ENCODE measurements at regions of chr2 and their contacts with region 1.

Region 1: GRCh38 chr2:74178201-74179062 is at the start of gene MOB1A:
- DNase-seq: peak; percentile 98
- ATAC-seq: peak; percentile 86
- H3K4me3 Mint-ChIP-seq: peak within 1 kb of the TSS; percentile 91
- H3K27ac Mint-ChIP-seq: peak within 1 kb of the TSS; percentile 92
- H3K4me1 Mint-ChIP-seq: peaks cover 31% of the 10 kb centered on the region
- H3K27me3 Mint-ChIP-seq: no peaks in the 10 kb centered on the region
- total RNA-seq, gene MOB1A: 178 TPM

Region 2: DNA sequence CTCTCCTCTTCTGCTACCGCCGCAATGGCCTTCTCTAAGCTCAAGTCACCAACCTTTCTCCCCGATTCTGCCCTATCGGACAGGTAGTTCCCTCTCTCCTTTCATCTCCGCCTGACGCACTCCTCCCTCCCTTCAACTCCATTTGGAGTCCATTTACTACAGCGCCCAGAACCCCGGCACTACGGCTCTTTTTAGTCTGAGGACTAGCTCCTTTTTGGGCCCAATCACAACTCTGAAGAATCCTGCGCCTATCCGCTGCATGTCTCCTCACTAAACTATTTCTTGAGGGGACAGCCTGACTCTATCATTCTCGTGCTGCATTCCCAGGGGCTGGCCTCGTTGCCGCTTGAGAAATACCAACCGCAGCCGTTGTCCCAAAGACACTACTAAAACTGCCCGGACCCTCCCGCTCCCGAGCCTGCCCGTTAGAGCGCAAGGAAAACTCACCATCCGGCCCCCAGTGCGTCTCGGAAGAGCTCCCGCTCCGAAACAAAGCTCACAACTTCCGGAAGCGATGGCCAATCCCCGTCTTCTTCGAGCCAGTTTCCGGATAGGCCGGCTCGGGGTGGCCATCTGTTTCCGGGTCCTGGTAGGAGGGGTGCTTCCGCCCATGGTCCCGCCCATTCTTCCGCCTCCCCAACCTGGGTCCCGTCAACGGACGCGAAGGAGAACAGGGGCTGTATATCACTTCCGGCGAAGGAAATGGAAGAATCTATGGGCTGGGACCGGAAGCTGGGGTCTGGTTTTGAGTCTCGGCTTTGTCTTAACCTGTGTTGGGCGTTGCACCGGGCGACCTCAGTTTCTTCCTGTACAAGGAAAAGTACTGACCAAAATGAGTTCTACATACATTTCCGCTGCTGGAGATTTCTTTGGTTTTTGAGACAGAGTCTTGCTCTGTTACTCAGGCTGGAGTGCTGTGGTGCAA is 441.3 kb before region 1 on chr2 and contains the start of gene TPRKB:
- POLR2A ChIA-PET with region 1: interaction called, 11 read pairs
- DNase-seq: peak; percentile 93
- ATAC-seq: peak; percentile 95
- H3K4me3 Mint-ChIP-seq: peak within 1 kb of the TSS; percentile 94
- H3K27ac Mint-ChIP-seq: peak within 1 kb of the TSS; percentile 86
- H3K4me1 Mint-ChIP-seq: peaks cover 12% of the 10 kb centered on the region
- H3K27me3 Mint-ChIP-seq: no peaks in the 10 kb centered on the region
- total RNA-seq, gene TPRKB: 36.1 to 37.5 TPM

Region 3: GRCh38 chr2:73985308-73986084 is 192.9 kb before region 1 on chr2:
- POLR2A ChIA-PET with region 1: interaction called, 17 read pairs
- DNase-seq: peak; percentile 74
- ATAC-seq: peak; percentile 32
- H3K4me3 Mint-ChIP-seq: peak overlapping the region; percentile 83
- H3K27ac Mint-ChIP-seq: peak overlapping the region; percentile 91
- H3K4me1 Mint-ChIP-seq: peaks cover 63% of the 10 kb centered on the region
- H3K27me3 Mint-ChIP-seq: no peaks in the 10 kb centered on the region

Region 4: DNA sequence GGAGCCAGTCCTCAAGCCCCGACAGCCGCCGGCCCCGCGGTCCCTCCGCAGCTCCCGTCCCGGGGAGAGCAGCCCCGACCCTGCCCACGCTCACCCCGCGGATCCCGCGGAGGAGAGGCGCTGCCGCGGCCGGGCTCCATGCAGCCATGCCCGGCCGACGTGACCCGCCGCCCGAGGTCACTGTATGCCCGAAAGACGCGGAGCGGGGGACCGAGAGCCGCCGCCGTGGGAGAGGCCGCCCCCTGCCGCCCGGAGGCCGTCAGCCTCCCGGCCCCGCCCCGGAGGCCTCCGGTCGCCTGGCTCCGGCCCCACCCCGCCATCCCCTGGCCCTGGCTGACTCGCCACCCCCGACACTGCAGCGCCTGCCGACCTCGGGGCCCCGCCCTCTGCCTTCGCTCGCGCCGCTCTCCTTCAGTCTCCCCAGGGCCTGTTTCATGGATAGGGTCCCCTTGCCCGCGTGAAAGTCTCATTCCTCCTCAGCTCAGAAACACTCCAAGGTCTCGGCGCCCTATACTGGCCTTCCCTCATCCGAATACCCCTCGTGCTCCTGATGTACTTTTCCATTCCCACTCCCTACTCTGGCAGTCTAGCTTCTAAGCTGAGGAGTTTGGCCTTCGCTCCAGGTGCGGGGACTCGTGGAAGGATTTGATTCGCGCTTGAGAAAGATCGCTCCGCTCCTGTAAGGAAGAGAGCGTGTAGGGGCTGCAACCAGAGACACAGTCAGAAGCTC is 30.5 kb before region 1 on chr2 and contains the start of gene BOLA3:
- POLR2A ChIA-PET with region 1: interaction called, 42 read pairs
- DNase-seq: peak; percentile 91
- ATAC-seq: peak; percentile 96
- H3K4me3 Mint-ChIP-seq: no peak within 1 kb of the TSS
- H3K27ac Mint-ChIP-seq: no peak within 1 kb of the TSS
- H3K4me1 Mint-ChIP-seq: peaks cover 3% of the 10 kb centered on the region
- H3K27me3 Mint-ChIP-seq: no peaks in the 10 kb centered on the region
- total RNA-seq, gene BOLA3: 47.7 to 53.8 TPM

Region 5: GRCh38 chr2:74191596-74192380 is 13.4 kb after region 1 on chr2:
- POLR2A ChIA-PET with region 1: interaction called, 276 read pairs
- DNase-seq: no peak
- ATAC-seq: no peak
- H3K4me3 Mint-ChIP-seq: no peak overlapping the region
- H3K27ac Mint-ChIP-seq: no peak overlapping the region
- H3K4me1 Mint-ChIP-seq: peaks cover 9% of the 10 kb centered on the region
- H3K27me3 Mint-ChIP-seq: peaks cover 7% of the 10 kb centered on the region